ENCODE measurements at regions of chr6 and their contacts with region 1.

Region 1: GRCh38 chr6:35452186-35453090 is at the start of gene FANCE:
- DNase-seq: peak; percentile 95
- ATAC-seq: peak; percentile 90
- H3K4me3 Mint-ChIP-seq: peak within 1 kb of the TSS; percentile 78
- H3K27ac Mint-ChIP-seq: peak within 1 kb of the TSS; percentile 39
- H3K4me1 Mint-ChIP-seq: peaks cover 36% of the 10 kb centered on the region
- H3K27me3 Mint-ChIP-seq: no peaks in the 10 kb centered on the region
- CTCF ChIP-seq: no peak
- total RNA-seq, gene FANCE: 18.8 to 19.4 TPM

Region 2: DNA sequence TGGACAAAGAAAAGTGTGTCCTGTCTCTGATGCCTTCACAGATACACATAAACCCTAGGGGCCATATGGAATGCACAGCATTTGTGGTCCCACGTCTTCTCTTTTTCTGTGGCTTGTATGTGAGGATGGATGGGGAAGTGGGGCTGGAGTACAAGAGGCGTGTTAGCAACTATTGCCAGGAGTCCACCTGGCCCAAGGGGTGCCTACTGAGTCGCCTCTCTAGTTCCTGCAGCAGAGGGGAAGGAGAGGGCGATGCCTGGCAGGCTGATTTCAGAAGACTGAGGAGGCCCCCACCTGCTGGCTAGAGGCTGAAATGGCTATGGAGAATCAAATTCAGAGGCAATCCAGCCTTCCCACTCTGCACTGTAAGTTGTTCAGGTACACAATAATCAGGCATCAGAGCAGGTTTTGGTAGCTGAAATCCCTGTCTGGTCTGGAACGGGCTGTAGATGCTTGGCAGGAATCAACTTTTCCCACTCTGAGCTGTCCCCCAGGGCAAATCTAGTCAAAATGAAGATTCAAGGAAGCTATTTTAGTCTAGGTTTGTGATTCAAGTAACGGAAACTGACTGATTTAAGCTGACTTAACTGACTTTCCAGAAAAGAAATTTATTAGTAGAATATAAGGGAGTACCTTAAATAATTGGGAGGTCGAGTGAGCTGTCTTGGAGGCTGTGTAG is 125.0 kb before region 1 on chr6:
- CTCF ChIA-PET with region 1: interaction called, 17 read pairs
- POLR2A ChIA-PET with region 1: interaction called, 3 read pairs
- intact Hi-C with region 1: no loop called
- DNase-seq: peak; percentile 88
- ATAC-seq: peak; percentile 95
- H3K4me3 Mint-ChIP-seq: no peak overlapping the region
- H3K27ac Mint-ChIP-seq: peak overlapping the region; percentile 68
- H3K4me1 Mint-ChIP-seq: peaks cover 18% of the 10 kb centered on the region
- H3K27me3 Mint-ChIP-seq: no peaks in the 10 kb centered on the region
- CTCF ChIP-seq: peak; percentile 76

Region 3: DNA sequence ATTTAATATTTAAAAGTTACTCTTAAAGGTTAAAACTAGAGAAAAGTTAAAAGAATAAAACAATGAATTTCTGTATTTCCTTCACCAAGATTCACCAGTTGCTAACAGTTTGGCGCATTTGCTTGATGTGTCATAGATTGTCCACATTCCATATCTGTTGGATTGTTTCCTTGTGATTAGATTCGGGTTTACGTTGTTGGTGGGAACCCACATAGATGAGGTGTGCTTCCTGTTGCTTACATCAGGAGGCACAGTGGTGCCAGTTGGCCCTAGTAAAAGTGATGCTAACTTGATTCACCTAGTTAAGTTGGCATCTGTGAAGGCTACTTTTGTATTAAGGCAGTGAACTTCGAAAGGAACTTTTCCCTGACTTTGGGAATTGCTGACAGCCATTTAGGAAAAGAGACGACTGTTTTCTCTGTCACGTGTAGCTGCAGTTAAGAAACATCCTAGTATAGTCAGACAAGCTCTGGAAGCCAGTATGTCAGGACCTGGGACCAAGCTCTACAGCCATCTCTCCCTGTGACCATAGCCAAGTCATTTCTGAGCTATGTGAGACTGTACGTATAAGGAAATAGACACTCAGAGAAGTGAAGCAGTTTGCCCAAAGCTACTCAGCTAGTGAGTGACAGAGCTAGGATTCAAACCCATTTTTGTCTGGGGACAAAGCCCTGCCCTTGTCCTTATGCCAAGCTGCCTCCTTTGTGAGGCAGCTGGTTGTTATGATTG is 61.0 kb before region 1 on chr6:
- CTCF ChIA-PET with region 1: interaction called, 15 read pairs
- POLR2A ChIA-PET with region 1: no interaction called
- intact Hi-C with region 1: no loop called
- DNase-seq: no peak
- ATAC-seq: no peak
- H3K4me3 Mint-ChIP-seq: no peak overlapping the region
- H3K27ac Mint-ChIP-seq: no peak overlapping the region
- H3K4me1 Mint-ChIP-seq: peaks cover 43% of the 10 kb centered on the region
- H3K27me3 Mint-ChIP-seq: no peaks in the 10 kb centered on the region
- CTCF ChIP-seq: no peak

Region 4: GRCh38 chr6:35435074-35435837 is 17.2 kb before region 1 on chr6:
- CTCF ChIA-PET with region 1: interaction called, 23 read pairs
- POLR2A ChIA-PET with region 1: interaction called, 3 read pairs
- intact Hi-C with region 1: no loop called
- DNase-seq: no peak
- ATAC-seq: no peak
- H3K4me3 Mint-ChIP-seq: no peak overlapping the region
- H3K27ac Mint-ChIP-seq: no peak overlapping the region
- H3K4me1 Mint-ChIP-seq: no peaks in the 10 kb centered on the region
- H3K27me3 Mint-ChIP-seq: no peaks in the 10 kb centered on the region
- CTCF ChIP-seq: no peak

Measured in activated CD8-positive, alpha-beta T cell treated with anti-CD3 and anti-CD28 coated beads for 36 hours (primary cell).